ENCODE measurements at regions of chr7 and their contacts with region 1.

Region 1: GRCh38 chr7:105830391-105831301 is 45.8 kb downstream of the ATXN7L1 start:
- DNase-seq: peak; percentile 95
- ATAC-seq: peak; percentile 91
- H3K4me3 ChIP-seq: peak overlapping the region in 1 of 2 experiments; percentile 31; a peak in 2 of 4 replicates
- H3K27ac ChIP-seq: peak overlapping the region; percentile 57
- H3K4me1 ChIP-seq: peaks cover 49 to 63% of the 10 kb centered on the region in 2 experiments
- H3K27me3 ChIP-seq: no peaks in the 10 kb centered on the region
- CTCF ChIP-seq: no peak
- POLR2A ChIP-seq: no peak
- RAD21 ChIP-seq: peak; percentile 41; the same call in 1 of the 2 replicates

Region 2: GRCh38 chr7:105876091-105876963 is 45.7 kb after region 1 on chr7 and contains the start of gene ATXN7L1:
- CTCF ChIA-PET with region 1: interaction called, 3 read pairs
- POLR2A ChIA-PET with region 1: no interaction called
- RAD21 ChIA-PET with region 1: no interaction called
- intact Hi-C with region 1: loop called (anchors 2 kb)
- DNase-seq: peak; percentile 95
- ATAC-seq: peak; percentile 89
- H3K4me3 ChIP-seq: peak within 1 kb of the TSS; percentile 87 to 92
- H3K27ac ChIP-seq: peak within 1 kb of the TSS; percentile 76
- H3K4me1 ChIP-seq: peaks cover 11 to 36% of the 10 kb centered on the region in 2 experiments
- H3K27me3 ChIP-seq: no peaks in the 10 kb centered on the region
- CTCF ChIP-seq: peak in 1 of 3 experiments; percentile 33; a peak in 1 of 6 replicates
- POLR2A ChIP-seq: peak; percentile 86
- RAD21 ChIP-seq: no peak
- total RNA-seq, gene ATXN7L1: 11.5 TPM

Measured in HCT116 (cell line).